T-cell (primary cell): ENCODE measurements at regions of chr14 and their contacts with region 1.

Region 1: GRCh38 chr14:102516531-102517415 is 7.2 kb upstream of the ANKRD9 start:
- DNase-seq: peak in 26 of 35 experiments; percentile 25 to 77 (median 48)
- ATAC-seq: peak; percentile 85 to 88 (median 87)
- H3K4me3 ChIP-seq: peak overlapping the region; percentile 47 to 52
- H3K4me3 Mint-ChIP-seq: peak overlapping the region; percentile 66 to 83 (median 81)
- H3K27ac ChIP-seq: no peak overlapping the region
- H3K27ac Mint-ChIP-seq: no peak overlapping the region
- H3K4me1 ChIP-seq: peaks cover 0 to 10% of the 10 kb centered on the region in 2 experiments
- H3K4me1 Mint-ChIP-seq: peaks cover 3 to 5% (median 5%) of the 10 kb centered on the region in 3 donors
- H3K27me3 ChIP-seq: peaks cover 2 to 26% of the 10 kb centered on the region in 2 experiments
- H3K27me3 Mint-ChIP-seq: peaks cover 0 to 15% of the 10 kb centered on the region in 2 donors

Region 2: DNA sequence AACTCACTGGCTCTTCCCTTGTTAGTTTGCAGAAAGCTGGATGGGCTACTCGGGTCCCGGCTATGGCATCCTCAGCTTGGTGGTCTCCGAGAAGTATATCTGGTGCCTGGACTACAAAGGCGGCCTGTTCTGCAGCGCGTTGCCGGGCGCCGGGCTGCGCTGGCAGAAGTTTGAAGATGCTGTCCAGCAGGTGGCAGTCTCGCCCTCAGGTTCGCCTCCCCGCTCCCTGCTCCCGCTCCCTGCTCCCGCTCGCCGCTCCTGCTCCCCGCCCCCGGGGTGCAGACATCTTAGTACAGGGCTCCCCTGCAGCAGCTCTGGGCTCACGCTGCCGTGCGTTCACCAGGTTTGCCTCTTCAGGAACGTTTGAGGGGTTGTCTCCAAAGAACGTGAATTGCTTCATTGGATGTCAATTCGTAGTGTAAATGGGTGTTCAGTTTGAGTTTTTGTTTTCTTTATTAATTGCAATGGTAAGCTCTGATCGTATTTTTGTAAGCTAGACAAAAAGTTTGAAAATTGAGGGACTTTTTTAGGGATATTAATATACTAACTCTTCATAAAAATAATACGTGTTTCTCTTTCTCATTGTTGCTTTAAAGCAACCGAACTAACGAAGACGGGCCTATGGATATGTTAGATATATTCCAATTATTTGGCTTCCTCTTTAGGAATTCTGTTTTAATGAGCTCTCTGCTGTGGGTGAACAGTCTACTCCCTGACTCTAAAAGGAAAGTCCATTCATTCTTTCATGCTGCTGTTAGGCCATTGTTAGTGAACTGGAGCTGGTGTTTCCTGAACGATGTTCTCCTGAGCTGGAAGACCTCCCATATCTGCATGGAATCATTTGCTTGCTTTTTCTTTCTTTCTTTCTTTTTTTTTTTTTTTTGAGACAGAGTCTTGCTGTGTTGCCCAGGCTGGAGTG is 78.5 kb before region 1 on chr14:
- CTCF ChIA-PET with region 1: interaction called, 7 to 11 read pairs
- POLR2A ChIA-PET with region 1: no interaction called
- DNase-seq: peak in 33 of 35 experiments; percentile 6 to 84 (median 44)
- ATAC-seq: peak; percentile 44 to 63 (median 57)
- H3K4me3 ChIP-seq: no peak overlapping the region
- H3K4me3 Mint-ChIP-seq: no peak overlapping the region
- H3K27ac ChIP-seq: no peak overlapping the region
- H3K27ac Mint-ChIP-seq: no peak overlapping the region
- H3K4me1 ChIP-seq: peaks cover 0 to 6% of the 10 kb centered on the region in 2 experiments
- H3K4me1 Mint-ChIP-seq: peaks cover 0 to 6% (median 3%) of the 10 kb centered on the region in 3 donors
- H3K27me3 ChIP-seq: no peaks in the 10 kb centered on the region
- H3K27me3 Mint-ChIP-seq: no peaks in the 10 kb centered on the region

Region 3: GRCh38 chr14:102579696-102580334 is 63.0 kb after region 1 on chr14:
- CTCF ChIA-PET with region 1: no interaction called
- POLR2A ChIA-PET with region 1: no interaction called
- DNase-seq: no peak
- ATAC-seq: no peak
- H3K4me3 ChIP-seq: no peak overlapping the region
- H3K4me3 Mint-ChIP-seq: no peak overlapping the region
- H3K27ac ChIP-seq: no peak overlapping the region
- H3K27ac Mint-ChIP-seq: no peak overlapping the region
- H3K4me1 ChIP-seq: peaks cover 0 to 2% of the 10 kb centered on the region in 2 experiments
- H3K4me1 Mint-ChIP-seq: no peaks in the 10 kb centered on the region
- H3K27me3 ChIP-seq: peaks cover 0 to 31% of the 10 kb centered on the region in 2 experiments
- H3K27me3 Mint-ChIP-seq: no peaks in the 10 kb centered on the region

Region 4: DNA sequence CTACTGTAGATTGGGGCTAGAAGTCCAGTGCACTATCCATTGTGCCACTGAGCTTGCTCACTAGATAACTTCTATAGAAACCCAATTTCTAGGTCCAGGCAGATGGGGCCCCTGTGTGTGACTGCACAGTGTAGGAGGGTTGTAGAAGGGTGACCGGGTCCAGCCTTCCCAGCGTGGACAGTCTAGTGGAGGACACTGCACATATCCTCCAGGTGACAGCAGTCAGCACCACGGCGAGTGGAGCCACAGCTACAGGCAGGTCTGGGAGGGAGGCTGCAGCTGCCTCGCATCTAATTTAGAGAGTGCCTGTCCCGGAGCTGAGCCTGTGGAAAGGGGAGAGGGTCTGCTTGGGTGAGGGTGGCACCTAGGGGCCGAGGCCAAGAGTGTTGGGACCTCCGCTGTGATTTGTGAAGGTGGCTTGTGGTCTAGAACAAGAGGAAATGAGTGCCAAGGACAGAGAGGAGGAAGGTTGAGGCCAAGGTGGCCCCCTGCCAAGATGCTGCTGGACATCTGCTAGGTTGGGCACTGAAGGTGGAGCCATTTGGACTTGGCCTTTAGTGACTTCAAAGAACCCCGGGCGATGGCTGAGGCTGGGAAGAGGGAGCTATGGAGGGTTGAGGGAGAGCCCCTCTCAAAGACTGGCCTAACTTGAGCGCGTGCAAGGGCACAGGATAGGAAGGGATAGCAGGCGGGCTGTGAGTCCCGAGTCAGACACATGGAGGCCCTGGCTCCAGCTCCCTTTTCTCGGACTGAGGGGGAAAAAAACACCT is 214.5 kb after region 1 on chr14:
- CTCF ChIA-PET with region 1: no interaction called
- POLR2A ChIA-PET with region 1: no interaction called
- DNase-seq: no peak
- ATAC-seq: no peak
- H3K4me3 ChIP-seq: no peak overlapping the region
- H3K4me3 Mint-ChIP-seq: no peak overlapping the region
- H3K27ac ChIP-seq: no peak overlapping the region
- H3K27ac Mint-ChIP-seq: no peak overlapping the region
- H3K4me1 ChIP-seq: no peaks in the 10 kb centered on the region
- H3K4me1 Mint-ChIP-seq: no peaks in the 10 kb centered on the region
- H3K27me3 ChIP-seq: no peaks in the 10 kb centered on the region
- H3K27me3 Mint-ChIP-seq: no peaks in the 10 kb centered on the region